B cell (primary cell): ENCODE measurements at regions of chr5 and their contacts with region 1.

Region 1: GRCh38 chr5:132456296-132457001 is 34.1 kb downstream of the IRF1 start:
- DNase-seq: peak; percentile 84
- ATAC-seq: peak; percentile 78
- H3K4me3 ChIP-seq: peak overlapping the region; percentile 12 to 53 (median 30)
- H3K4me3 Mint-ChIP-seq: peak overlapping the region; percentile 74
- H3K27ac ChIP-seq: peak overlapping the region; percentile 88 to 93
- H3K27ac Mint-ChIP-seq: peak overlapping the region; percentile 99
- H3K4me1 ChIP-seq: peaks cover 79 to 84% of the 10 kb centered on the region in 2 donors
- H3K4me1 Mint-ChIP-seq: peaks cover 92% of the 10 kb centered on the region
- H3K27me3 ChIP-seq: no peaks in the 10 kb centered on the region
- H3K27me3 Mint-ChIP-seq: no peaks in the 10 kb centered on the region
- CTCF ChIP-seq: no peak

Region 2: DNA sequence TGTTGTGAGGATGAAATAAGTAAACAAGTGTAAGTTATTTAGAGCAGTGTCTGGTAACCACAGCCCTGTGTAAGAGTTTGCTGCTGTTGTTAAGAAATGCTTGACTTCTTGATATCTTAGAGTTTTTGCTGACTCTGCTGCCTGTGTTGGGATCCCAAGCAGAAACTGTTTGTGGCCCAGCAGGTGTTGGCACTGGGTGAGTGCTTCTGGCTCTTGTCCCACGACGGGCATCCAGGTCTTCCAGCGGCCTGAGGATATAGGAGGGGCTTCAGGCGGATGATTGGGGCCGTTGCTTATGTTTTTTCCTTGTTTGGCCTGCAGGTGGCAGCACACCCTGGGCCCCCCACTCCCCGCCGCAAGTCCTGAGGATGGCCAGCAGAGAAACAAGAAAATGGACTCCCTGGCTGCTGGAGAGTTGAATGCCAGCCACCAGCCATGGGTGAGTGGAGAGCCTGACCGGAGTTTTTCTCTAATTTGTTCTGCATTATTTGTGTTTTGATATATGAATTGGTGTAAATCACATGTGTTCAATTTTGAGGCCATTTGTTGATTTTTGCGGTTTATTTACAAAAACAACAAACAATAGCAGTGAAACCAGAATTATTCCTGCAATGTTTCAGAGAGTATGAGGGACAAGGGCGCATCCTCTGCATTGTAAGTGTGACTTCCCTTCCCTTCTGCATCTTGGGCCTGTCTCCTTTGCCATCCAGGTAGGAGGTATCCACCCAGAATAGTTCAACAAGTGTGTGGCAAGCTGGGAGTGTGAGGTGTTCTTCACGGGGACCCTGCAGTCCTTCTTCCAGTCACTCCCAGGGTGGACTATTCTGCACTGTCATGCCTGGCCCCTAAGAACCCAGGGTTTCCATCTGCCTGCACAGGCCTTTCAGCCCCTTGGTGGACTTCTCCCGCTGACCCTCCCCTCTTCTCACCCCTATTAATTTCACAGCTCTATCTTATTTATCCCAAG is 36.7 kb before region 1 on chr5:
- CTCF ChIA-PET with region 1: interaction called, 127 read pairs
- POLR2A ChIA-PET with region 1: interaction called, 77 read pairs
- intact Hi-C with region 1: loop called (anchors 1 kb)
- DNase-seq: peak; percentile 81
- ATAC-seq: peak; percentile 34
- H3K4me3 ChIP-seq: peak overlapping the region in 1 of 5 experiments; percentile 51
- H3K4me3 Mint-ChIP-seq: peak overlapping the region; percentile 90
- H3K27ac ChIP-seq: peak overlapping the region; percentile 92 to 94
- H3K27ac Mint-ChIP-seq: peak overlapping the region; percentile 93
- H3K4me1 ChIP-seq: peaks cover 90 to 91% of the 10 kb centered on the region in 2 donors
- H3K4me1 Mint-ChIP-seq: peaks cover 95% of the 10 kb centered on the region
- H3K27me3 ChIP-seq: no peaks in the 10 kb centered on the region
- H3K27me3 Mint-ChIP-seq: no peaks in the 10 kb centered on the region
- CTCF ChIP-seq: peak; percentile 91

Region 3: DNA sequence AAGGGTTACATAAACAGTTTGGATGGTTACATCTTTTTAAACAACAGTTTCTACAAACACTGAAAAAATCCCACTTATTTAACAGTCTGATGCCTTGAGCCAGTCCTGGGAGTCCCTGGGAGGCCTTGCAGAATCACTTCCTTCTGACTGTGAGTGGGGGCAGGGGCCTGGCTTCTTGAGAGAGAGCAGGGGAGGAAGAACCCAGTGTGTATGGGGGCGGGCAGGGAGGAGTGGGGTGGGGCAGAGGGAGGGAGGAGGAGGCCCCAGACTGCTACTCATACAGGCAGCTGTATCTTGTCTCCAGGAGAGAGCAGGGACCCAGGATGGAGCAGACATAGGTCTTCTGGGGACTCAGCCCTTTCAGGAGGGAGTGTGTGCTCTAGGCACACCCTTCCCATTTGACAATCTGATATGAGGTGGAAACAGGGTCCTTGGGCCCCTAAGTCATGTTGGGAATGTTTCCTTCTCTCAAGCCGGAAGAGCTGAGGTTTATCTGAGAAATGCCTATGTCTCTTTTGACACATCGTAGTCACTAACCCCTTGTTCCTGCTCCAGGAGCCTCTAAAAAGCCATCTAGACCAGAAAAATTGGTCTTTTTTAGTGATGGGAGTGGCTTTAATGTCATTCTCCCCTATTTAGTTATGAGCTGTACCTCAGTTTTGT is 18.7 kb before region 1 on chr5:
- CTCF ChIA-PET with region 1: interaction called, 15 read pairs
- POLR2A ChIA-PET with region 1: interaction called, 5 read pairs
- intact Hi-C with region 1: loop called (anchors 2 kb)
- DNase-seq: peak; percentile 75
- ATAC-seq: peak; percentile 97
- H3K4me3 ChIP-seq: no peak overlapping the region
- H3K4me3 Mint-ChIP-seq: peak overlapping the region; percentile 55
- H3K27ac ChIP-seq: peak overlapping the region; percentile 42 to 65
- H3K27ac Mint-ChIP-seq: peak overlapping the region; percentile 83
- H3K4me1 ChIP-seq: peaks cover 22 to 44% of the 10 kb centered on the region in 2 donors
- H3K4me1 Mint-ChIP-seq: peaks cover 64% of the 10 kb centered on the region
- H3K27me3 ChIP-seq: no peaks in the 10 kb centered on the region
- H3K27me3 Mint-ChIP-seq: no peaks in the 10 kb centered on the region
- CTCF ChIP-seq: no peak

Region 4: GRCh38 chr5:132473019-132473531 is 16.6 kb after region 1 on chr5:
- CTCF ChIA-PET with region 1: interaction called, 128 read pairs
- POLR2A ChIA-PET with region 1: interaction called, 49 read pairs
- intact Hi-C with region 1: loop called (anchors 2 kb)
- DNase-seq: peak; percentile 88
- ATAC-seq: peak; percentile 86
- H3K4me3 ChIP-seq: no peak overlapping the region
- H3K4me3 Mint-ChIP-seq: peak overlapping the region; percentile 83
- H3K27ac ChIP-seq: peak overlapping the region; percentile 81 to 93
- H3K27ac Mint-ChIP-seq: peak overlapping the region; percentile 99
- H3K4me1 ChIP-seq: peaks cover 46 to 75% of the 10 kb centered on the region in 2 donors
- H3K4me1 Mint-ChIP-seq: peaks cover 78% of the 10 kb centered on the region
- H3K27me3 ChIP-seq: no peaks in the 10 kb centered on the region
- H3K27me3 Mint-ChIP-seq: no peaks in the 10 kb centered on the region
- CTCF ChIP-seq: no peak

Region 5: DNA sequence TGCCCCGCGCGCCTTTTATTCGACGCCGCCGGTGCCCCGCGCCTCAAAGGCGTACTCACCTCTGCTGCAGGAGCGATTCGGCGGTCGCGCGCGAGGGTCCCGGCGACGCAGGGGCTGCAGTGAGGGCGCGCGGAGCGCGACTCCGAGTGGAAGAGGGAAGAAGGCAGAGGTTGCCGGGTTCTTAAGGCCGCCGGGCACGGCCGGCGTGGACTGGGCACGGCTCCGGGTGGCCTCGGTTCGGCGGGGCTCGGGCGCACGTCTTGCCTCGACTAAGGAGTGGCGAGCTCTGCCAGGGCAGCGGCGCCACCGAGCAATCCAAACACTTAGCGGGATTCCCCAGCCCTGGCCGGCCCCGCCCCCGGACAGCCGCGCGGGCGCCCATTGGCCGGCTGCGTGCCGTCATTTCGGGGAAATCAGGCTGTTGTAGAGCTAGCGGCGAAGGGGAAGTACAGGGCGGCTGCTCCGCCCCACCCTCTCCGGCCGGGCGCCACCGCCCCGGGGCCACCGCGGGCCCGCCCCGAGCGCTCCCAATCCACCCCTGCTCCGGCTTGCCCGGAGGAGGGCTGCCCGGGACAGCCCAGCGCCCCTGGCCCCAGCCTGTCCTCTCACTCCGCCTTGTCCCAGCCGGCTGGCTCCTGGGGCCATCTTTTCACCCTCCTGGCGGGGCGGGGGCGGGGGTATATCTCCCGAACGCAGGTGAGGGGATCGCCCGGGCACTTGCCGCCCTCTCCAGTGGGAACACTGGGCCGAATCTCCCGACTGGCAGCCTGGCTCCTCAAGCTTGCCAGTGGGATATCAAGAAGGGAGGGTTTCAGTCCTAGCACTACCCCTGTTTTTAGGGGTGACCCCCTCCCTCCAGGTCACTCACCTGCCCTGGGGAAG is 34.3 kb after region 1 on chr5 and contains the start of gene IRF1:
- CTCF ChIA-PET with region 1: interaction called, 82 read pairs
- POLR2A ChIA-PET with region 1: interaction called, 65 read pairs
- intact Hi-C with region 1: loop called (anchors 1 kb)
- DNase-seq: peak; percentile 98
- ATAC-seq: peak; percentile 70
- H3K4me3 ChIP-seq: peak within 1 kb of the TSS; percentile 81 to 99 (median 89)
- H3K4me3 Mint-ChIP-seq: peak within 1 kb of the TSS; percentile 96
- H3K27ac ChIP-seq: peak within 1 kb of the TSS; percentile 99
- H3K27ac Mint-ChIP-seq: peak within 1 kb of the TSS; percentile 96
- H3K4me1 ChIP-seq: peaks cover 74 to 81% of the 10 kb centered on the region in 2 donors
- H3K4me1 Mint-ChIP-seq: peaks cover 76% of the 10 kb centered on the region
- H3K27me3 ChIP-seq: no peaks in the 10 kb centered on the region
- H3K27me3 Mint-ChIP-seq: no peaks in the 10 kb centered on the region
- CTCF ChIP-seq: no peak
- total RNA-seq, gene IRF1: 304 and 306 TPM in 2 replicates